PC-3 (cell line): ENCODE measurements at regions of chr14 and their contacts with region 1.

Region 1: DNA sequence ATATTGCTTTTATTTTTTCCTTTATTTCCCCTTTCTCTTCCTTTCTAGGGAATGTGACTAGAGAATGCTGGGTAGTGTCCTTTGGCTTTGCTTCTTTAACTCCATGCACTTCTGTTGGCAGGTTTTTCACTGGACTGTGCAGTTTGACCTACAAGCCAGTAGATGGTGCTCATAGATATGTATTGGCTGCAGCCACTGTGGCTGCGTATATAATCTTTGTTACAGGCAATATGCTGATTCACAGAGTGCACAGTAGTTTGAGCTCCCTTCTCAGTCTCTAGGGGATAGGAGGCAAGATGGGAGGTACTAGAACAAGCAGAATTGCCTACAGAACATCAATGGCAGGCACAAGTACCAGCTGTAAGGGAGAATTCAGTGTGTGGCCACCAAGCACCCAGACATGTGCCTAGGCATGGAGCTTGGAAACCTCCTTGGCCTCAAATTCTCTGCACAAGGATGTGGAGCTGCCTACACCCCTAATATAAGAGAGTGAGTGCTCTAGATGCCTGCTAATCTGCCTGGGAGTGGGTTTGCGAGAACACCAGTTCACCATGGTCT is 503.6 kb downstream of the LRFN5 start:
- DNase-seq: peak; percentile 85
- ATAC-seq: peak; percentile 78
- H3K4me3 ChIP-seq: no peak overlapping the region
- H3K27ac ChIP-seq: no peak overlapping the region
- H3K4me1 ChIP-seq: peaks cover 17% of the 10 kb centered on the region
- H3K27me3 ChIP-seq: no peaks in the 10 kb centered on the region
- CTCF ChIP-seq: peak; percentile 95

Region 2: GRCh38 chr14:41925409-41925808 is 184.8 kb before region 1 on chr14:
- CTCF ChIA-PET with region 1: no interaction called
- POLR2A ChIA-PET with region 1: no interaction called
- intact Hi-C with region 1: loop called (anchors 5 kb)
- DNase-seq: peak; percentile 63
- ATAC-seq: peak; percentile 97
- H3K4me3 ChIP-seq: no peak overlapping the region
- H3K27ac ChIP-seq: no peak overlapping the region
- H3K4me1 ChIP-seq: no peaks in the 10 kb centered on the region
- H3K27me3 ChIP-seq: no peaks in the 10 kb centered on the region
- CTCF ChIP-seq: peak; percentile 73

Region 3: GRCh38 chr14:42541535-42542001 is 431.3 kb after region 1 on chr14:
- CTCF ChIA-PET with region 1: no interaction called
- POLR2A ChIA-PET with region 1: no interaction called
- intact Hi-C with region 1: loop called (anchors 10 kb)
- DNase-seq: peak; percentile 54
- ATAC-seq: peak; percentile 93
- H3K4me3 ChIP-seq: no peak overlapping the region
- H3K27ac ChIP-seq: peak overlapping the region; percentile 46
- H3K4me1 ChIP-seq: peaks cover 12% of the 10 kb centered on the region; the same call in 1 of the 2 replicates
- H3K27me3 ChIP-seq: no peaks in the 10 kb centered on the region
- CTCF ChIP-seq: no peak